Natural killer cell (primary cell): ENCODE measurements at regions of chr6 and their contacts with region 1.

Region 1: GRCh38 chr6:118651282-118652050 is at the start of gene CEP85L:
- DNase-seq: peak; percentile 82 to 95
- ATAC-seq: peak; percentile 88 to 97 (median 89)
- H3K4me3 ChIP-seq: peak within 1 kb of the TSS; percentile 89
- H3K4me3 Mint-ChIP-seq: peak within 1 kb of the TSS; percentile 93
- H3K27ac ChIP-seq: peak within 1 kb of the TSS; percentile 83
- H3K27ac Mint-ChIP-seq: peak within 1 kb of the TSS; percentile 89 to 94
- H3K4me1 ChIP-seq: peaks cover 14% of the 10 kb centered on the region
- H3K4me1 Mint-ChIP-seq: peaks cover 25 to 41% of the 10 kb centered on the region in 2 donors
- H3K27me3 ChIP-seq: no peaks in the 10 kb centered on the region
- H3K27me3 Mint-ChIP-seq: no peaks in the 10 kb centered on the region
- CTCF ChIP-seq: no peak
- total RNA-seq, gene CEP85L: 75.0 to 85.2 (median 82.0) TPM

Region 2: GRCh38 chr6:117776441-117776840 is 875.0 kb before region 1 on chr6:
- intact Hi-C with region 1: no loop called
- DNase-seq: no peak
- ATAC-seq: no peak
- H3K4me3 ChIP-seq: no peak overlapping the region
- H3K4me3 Mint-ChIP-seq: no peak overlapping the region
- H3K27ac ChIP-seq: no peak overlapping the region
- H3K27ac Mint-ChIP-seq: no peak overlapping the region
- H3K4me1 ChIP-seq: no peaks in the 10 kb centered on the region
- H3K4me1 Mint-ChIP-seq: no peaks in the 10 kb centered on the region
- H3K27me3 ChIP-seq: no peaks in the 10 kb centered on the region
- H3K27me3 Mint-ChIP-seq: peaks cover 12 to 13% of the 10 kb centered on the region in 2 donors
- CTCF ChIP-seq: no peak

Region 3: DNA sequence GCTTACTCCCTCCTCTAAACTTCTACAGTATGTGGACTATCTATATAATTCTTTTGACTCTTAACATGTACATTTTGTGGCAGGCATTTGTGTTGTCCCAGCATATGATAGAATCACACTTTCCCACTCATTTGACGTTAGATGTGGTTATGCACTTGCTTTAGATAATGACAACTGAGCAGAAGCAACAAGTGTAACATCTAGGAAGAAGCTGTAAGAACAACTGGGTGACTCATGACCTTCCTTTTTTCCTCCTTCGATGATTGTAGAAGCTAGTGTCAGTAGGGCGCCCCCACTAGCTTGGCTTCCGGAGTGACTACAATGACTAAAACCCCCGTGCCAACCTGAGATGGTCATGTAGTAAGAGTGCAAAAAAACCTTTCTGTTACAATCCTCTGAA is 74.5 kb after region 1 on chr6:
- intact Hi-C with region 1: loop called (anchors 1 kb)
- DNase-seq: peak; percentile 42 to 72
- ATAC-seq: peak; percentile 86 to 93 (median 88)
- H3K4me3 ChIP-seq: no peak overlapping the region
- H3K4me3 Mint-ChIP-seq: no peak overlapping the region
- H3K27ac ChIP-seq: no peak overlapping the region
- H3K27ac Mint-ChIP-seq: peak overlapping the region; percentile 52 to 81
- H3K4me1 ChIP-seq: peaks cover 10% of the 10 kb centered on the region
- H3K4me1 Mint-ChIP-seq: peaks cover 15 to 25% of the 10 kb centered on the region in 2 donors
- H3K27me3 ChIP-seq: no peaks in the 10 kb centered on the region
- H3K27me3 Mint-ChIP-seq: no peaks in the 10 kb centered on the region
- CTCF ChIP-seq: peak; percentile 10